ENCODE measurements at regions of chr20 and their contacts with region 1.

Region 1: DNA sequence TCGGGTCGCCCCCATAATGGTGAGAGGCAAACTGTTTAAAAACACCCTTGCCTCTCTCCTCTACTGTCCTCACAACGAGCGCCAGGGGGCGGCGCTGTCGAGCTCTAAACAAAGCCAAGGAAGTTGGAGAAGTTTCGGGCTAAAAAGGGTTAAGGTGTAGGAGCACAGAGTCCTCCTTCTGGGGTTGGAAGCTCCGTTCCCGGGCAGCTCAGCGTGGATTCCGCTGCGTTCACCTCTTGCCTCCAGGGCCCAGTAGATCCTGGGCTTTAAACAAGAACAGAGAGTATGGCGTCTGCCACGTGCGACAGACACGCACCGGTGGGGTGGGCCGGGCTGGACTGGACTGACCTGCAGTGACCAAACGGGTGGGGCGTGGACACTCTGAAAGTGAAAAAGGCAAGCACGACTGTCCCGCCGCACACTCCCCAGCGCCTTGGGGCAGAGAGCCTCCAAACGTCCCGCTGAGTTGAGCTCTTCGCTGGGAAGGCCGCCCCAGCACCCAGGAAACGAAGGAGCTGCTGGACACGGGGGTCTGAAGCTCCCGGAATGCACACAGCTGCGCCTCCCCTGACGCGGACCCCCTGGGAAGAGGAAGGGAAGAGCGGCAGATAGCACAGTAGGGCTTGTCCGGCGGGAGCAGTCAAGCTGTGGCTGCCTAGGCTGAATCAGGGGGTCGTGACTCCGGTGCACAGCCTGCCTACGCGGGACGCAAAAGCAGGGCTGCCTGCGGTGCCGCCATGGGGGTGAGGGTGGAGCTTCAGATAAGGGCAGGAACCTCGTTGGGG is 1.6 kb upstream of the THBD start:
- DNase-seq: peak; percentile 95
- ATAC-seq: peak; percentile 53

Region 2: GRCh38 chr20:22691369-22692118 is 359.5 kb before region 1 on chr20:
- intact Hi-C with region 1: loop called (anchors 5 kb)
- DNase-seq: peak; percentile 90
- ATAC-seq: peak; percentile 87

Region 3: GRCh38 chr20:22861990-22862389 is 189.0 kb before region 1 on chr20:
- intact Hi-C with region 1: loop called (anchors 2 kb)
- DNase-seq: no peak
- ATAC-seq: no peak

Region 4: DNA sequence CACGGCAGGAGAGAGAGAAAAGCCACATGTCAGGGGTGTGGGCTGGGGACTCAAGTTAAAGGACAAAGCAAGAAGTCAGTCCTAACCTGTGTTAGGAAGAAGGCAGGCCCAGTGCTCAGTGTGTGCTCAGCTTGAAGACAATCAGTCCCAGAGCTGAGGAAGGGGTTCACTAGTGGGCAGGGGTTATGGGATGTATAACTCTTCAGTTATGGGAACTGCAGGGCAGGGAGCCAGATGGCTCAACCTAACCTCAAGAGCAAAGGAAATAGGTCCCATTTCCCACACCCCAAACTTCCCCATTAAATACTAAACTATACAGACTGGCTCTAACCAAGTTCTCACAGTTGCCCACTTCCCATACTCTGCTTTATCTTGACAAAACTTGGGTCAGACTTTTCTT is 23.3 kb before region 1 on chr20:
- intact Hi-C with region 1: no loop called
- DNase-seq: no peak
- ATAC-seq: peak; percentile 53

Region 5: GRCh38 chr20:23086056-23086566 is 35.1 kb after region 1 on chr20 and contains the start of gene CD93:
- intact Hi-C with region 1: loop called (anchors 2 kb)
- DNase-seq: peak; percentile 79
- ATAC-seq: peak; percentile 62
- total RNA-seq, gene CD93: 43.5 TPM

Region 6: DNA sequence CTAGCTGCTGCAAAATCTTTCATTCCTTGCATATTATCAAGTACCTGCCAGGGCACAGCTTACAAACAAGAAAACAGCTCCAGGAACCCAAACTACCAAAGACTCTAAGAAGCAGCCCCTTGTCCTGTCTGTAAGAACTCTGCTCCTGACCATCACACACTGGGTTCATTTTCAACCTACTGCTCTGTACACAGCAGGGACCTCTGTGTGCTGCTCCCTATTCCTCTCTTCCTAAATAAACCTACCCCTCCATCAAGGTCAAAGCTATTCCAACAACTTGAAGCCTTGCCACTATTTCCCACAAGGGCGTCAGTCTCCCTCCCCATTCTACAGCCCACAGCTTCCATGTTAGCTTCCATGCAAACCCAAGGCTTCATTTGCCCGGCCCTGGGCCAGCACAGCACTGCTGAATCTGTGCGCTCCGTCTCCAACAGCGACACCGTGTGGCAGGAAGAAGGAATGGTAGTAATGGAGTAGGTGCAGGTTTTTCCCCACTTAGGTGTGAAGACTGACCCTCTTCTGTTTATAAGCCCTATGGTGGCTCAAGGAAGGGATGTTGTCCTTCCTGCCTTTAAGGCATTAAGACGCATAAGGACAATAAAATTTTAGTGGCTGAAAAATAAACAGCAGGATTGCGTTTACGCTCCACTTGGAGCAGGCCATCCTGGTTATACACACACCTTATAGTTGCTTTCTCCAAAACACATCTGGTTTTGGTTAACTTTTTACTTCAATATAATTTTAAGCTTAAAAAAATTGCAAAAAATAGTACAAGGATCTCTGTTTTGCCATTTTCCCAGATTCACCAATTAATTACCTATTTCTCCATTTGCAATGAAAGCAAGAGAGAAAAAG is 184.4 kb after region 1 on chr20:
- intact Hi-C with region 1: loop called (anchors 2 kb)
- DNase-seq: peak; percentile 91
- ATAC-seq: peak; percentile 91

Measured in Right ventricle myocardium inferior (tissue), 1 donor.